ENCODE measurements at regions of chr1 and their contacts with region 1.

Region 1: GRCh38 chr1:218499011-218499691 is 154.0 kb downstream of the TGFB2 start:
- DNase-seq: no peak
- H3K4me3 ChIP-seq: peak overlapping the region; percentile 32 to 58
- H3K27ac ChIP-seq: peak overlapping the region; percentile 71 to 73
- H3K4me1 ChIP-seq: peaks cover 0 to 26% of the 10 kb centered on the region in 2 donors
- H3K27me3 ChIP-seq: no peaks in the 10 kb centered on the region
- CTCF ChIP-seq: no peak

Region 2: GRCh38 chr1:218369688-218370511 is 129.3 kb before region 1 on chr1:
- intact Hi-C with region 1: loop called (anchors 5 kb)
- DNase-seq: no peak
- H3K4me3 ChIP-seq: peak overlapping the region in 1 of 2 donors; percentile 11
- H3K27ac ChIP-seq: peak overlapping the region; percentile 64 to 76
- H3K4me1 ChIP-seq: peaks cover 14 to 25% of the 10 kb centered on the region in 2 donors
- H3K27me3 ChIP-seq: no peaks in the 10 kb centered on the region
- CTCF ChIP-seq: no peak

Region 3: DNA sequence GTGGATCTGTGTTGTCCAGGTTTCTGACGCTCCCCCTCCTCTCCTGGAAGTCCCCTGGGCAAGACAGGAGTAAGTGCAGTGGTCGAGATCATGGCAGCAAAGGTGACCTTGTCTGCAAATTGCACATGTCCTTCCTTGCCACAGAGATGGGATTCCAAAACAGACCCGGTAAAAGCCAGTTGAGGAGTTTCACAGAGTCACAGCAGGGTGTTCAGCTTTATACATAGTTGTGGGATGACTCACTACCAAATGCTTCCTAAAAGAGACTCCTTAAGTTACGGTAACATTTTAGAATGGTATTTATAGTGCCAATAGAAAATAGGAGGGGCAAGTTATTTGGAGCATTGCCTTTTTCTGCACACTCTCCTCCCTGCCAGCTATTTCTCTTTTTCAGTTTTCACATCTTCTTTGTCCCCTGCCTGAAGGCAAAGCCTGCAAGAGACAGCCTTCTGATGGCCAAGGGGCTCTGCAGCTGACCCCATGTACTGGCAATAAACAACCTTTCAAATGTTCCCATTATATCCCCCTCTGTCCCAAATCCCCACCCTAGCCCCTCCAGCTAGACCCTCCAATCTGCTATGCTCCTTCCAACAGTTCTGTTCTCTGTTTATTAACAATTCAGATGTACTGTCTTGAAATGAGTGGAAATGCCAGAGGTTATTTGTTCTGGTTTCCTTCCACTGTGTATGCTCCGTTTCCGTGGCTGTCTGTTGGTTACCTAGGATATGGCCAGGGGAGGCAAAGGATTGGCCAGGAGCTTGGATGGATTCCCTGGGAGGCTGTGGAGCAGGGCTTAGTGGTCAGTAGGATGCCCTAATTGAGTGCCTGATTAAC is 39.1 kb before region 1 on chr1:
- intact Hi-C with region 1: loop called (anchors 2 kb)
- DNase-seq: peak in 1 of 2 donors; percentile 72
- H3K4me3 ChIP-seq: peak overlapping the region in 1 of 2 donors; percentile 51
- H3K27ac ChIP-seq: peak overlapping the region; percentile 77 to 83
- H3K4me1 ChIP-seq: peaks cover 11 to 41% of the 10 kb centered on the region in 2 donors
- H3K27me3 ChIP-seq: no peaks in the 10 kb centered on the region
- CTCF ChIP-seq: no peak

Region 4: DNA sequence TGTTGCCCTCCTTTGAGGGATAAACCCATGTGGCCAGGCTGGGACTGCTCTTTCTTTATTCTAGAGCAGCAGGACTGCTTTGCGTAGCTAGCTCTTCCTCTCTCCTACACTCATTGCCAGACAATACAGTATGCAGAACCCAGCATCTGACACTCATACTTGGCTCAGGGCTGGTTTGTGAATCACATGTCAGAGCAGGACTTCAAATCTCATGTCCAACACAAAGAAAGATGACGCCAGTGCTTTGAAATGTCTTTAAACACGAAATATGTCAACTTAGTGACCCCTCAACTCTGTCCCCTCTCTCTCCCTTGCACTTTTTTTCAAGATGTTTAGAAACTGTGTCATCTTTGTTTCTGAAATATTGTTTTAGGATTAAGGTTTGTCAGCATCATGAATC is 19.0 kb before region 1 on chr1:
- intact Hi-C with region 1: loop called (anchors 1 kb)
- DNase-seq: peak in 1 of 2 donors; percentile 77
- H3K4me3 ChIP-seq: no peak overlapping the region
- H3K27ac ChIP-seq: peak overlapping the region; percentile 35 to 37
- H3K4me1 ChIP-seq: peaks cover 3 to 29% of the 10 kb centered on the region in 2 donors
- H3K27me3 ChIP-seq: no peaks in the 10 kb centered on the region
- CTCF ChIP-seq: no peak

Region 5: DNA sequence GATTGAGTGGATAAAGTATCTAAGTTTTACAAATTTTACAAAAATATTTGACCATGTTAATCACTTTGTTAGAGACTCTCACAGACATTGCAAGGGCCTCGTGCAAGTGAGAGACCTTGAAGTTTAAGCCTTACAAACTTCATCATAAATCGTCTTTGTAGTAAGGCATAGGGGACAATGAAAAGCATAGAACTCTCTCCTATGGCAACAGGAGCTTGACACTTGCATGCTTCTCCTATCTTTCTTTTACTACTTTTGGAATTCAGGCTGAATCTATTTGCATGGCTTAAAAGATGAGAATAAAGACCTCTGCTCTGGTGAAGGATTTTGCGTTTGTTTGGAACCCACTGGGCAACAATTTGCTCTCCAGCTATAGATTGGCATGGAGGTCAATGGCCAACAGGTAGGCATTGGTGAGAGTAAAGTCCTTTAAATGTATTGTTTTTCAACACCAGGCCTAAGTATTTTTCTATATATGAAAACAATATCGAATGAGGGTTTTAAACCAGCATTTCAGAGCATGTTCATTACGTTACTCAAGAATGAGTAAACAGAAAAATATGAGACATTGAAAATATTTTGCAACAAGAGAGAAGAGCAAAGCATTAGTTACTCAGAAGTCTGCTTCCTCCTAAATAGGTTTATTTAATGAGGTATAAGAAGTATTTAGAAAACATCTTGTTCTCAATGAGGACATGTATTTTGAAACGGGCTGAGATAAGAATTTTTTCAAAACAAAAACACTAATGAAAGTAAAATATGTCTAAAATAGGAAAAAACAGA is 38.2 kb after region 1 on chr1:
- intact Hi-C with region 1: no loop called
- DNase-seq: no peak
- H3K4me3 ChIP-seq: no peak overlapping the region
- H3K27ac ChIP-seq: no peak overlapping the region
- H3K4me1 ChIP-seq: no peaks in the 10 kb centered on the region
- H3K27me3 ChIP-seq: no peaks in the 10 kb centered on the region
- CTCF ChIP-seq: no peak

Region 6: DNA sequence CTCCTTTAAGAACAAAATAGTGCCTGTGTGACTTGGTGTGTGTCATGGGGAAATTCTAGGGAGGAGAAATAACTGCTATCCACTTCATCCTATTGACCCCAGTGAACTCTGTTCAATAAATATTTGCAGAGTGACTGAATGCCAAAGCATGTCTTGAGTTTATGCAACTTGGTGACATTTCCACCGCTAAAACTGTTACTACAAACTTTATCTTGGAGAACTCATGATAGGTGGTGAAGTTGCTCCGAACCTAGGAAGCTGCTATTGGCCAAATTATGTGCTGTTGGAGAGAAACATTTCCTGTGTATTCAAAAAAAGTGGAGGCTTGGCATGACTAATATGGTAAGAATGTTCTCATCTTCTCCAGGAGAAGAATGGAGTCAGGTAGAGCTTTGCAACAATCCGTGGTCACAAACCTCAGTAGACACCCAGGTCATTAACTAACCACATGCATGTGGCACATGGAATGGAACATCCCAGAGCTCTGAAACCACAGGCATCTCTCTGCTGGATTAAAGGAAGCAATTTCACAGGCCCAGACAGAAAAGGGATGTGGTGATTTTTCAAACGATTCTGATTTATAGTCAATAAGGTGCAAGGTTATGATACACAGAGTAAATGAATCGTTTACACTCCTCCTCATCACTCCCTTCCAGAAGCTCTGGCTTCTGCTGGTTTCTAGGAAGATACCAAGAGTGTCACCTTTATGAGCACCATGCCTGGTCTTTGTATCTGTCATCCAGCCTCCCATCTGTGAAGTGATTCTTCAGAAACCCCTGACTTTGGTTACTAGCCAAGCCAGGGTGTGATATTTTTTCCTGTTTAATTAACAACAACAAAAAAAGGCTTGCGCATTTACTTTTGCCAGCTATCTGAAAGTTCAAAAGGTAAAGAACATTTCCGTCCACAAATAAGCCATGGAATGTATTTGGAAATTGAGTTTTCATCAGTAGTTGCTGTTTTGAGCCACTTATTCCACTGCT is 207.1 kb after region 1 on chr1:
- intact Hi-C with region 1: no loop called
- DNase-seq: no peak
- H3K4me3 ChIP-seq: no peak overlapping the region
- H3K27ac ChIP-seq: no peak overlapping the region
- H3K4me1 ChIP-seq: no peaks in the 10 kb centered on the region
- H3K27me3 ChIP-seq: no peaks in the 10 kb centered on the region
- CTCF ChIP-seq: no peak

Region 7: DNA sequence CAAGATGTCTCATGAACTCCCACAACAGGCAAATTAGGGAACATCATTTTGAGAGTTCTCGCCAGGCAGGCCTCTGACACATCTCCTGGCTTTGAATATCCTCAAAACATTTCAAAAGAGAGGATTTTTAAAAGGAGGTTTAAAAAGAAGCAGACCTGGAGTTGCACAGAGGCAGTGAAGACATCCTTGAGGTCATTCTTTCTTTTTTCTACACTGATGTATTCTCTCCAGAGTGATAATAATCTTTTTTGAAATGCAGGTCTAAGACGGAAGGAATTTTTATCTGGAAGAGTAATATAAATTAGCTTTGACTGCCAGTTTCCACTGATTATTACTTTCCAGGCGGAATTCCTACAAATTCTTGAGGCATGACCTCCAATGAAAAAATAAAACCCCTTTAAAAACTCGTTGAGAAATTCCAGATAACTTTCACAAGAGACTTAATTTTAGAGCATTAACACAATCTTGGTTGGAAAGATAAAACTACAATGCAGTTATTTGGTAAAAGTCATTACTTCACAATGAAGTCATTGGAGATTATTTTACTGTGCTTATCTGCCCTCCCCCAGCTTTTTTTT is 799.5 kb after region 1 on chr1:
- intact Hi-C with region 1: loop called (anchors 5 kb)
- DNase-seq: no peak
- H3K4me3 ChIP-seq: no peak overlapping the region
- H3K27ac ChIP-seq: peak overlapping the region; percentile 76 to 77
- H3K4me1 ChIP-seq: peaks cover 4 to 31% of the 10 kb centered on the region in 2 donors
- H3K27me3 ChIP-seq: no peaks in the 10 kb centered on the region
- CTCF ChIP-seq: no peak